ENCODE measurements at regions of chr11 and their contacts with region 1.

Region 1: GRCh38 chr11:69925366-69926196 is 106.4 kb upstream of the FGF3 start:
- DNase-seq: no peak
- H3K4me3 ChIP-seq: no peak overlapping the region
- H3K27ac ChIP-seq: no peak overlapping the region
- H3K4me1 ChIP-seq: no peaks in the 10 kb centered on the region
- H3K27me3 ChIP-seq: peaks cover 50% of the 10 kb centered on the region
- CTCF ChIP-seq: no peak
- EP300 ChIP-seq: no peak
- POLR2A ChIP-seq: no peak

Region 2: GRCh38 chr11:70183483-70184169 is 258.0 kb after region 1 on chr11:
- in situ Hi-C with region 1: loop called in 1 of 4 experiments (anchors 10 kb)
- intact Hi-C with region 1: no loop called
- DNase-seq: no peak
- H3K4me3 ChIP-seq: no peak overlapping the region
- H3K27ac ChIP-seq: no peak overlapping the region
- H3K4me1 ChIP-seq: no peaks in the 10 kb centered on the region
- H3K27me3 ChIP-seq: peaks cover 8% of the 10 kb centered on the region
- CTCF ChIP-seq: no peak
- EP300 ChIP-seq: no peak
- POLR2A ChIP-seq: no peak

Measured in transverse colon (tissue), 4 donors.